Esophagus squamous epithelium (tissue), 5 donors: ENCODE measurements at regions of chr10 and their contacts with region 1.

Region 1: DNA sequence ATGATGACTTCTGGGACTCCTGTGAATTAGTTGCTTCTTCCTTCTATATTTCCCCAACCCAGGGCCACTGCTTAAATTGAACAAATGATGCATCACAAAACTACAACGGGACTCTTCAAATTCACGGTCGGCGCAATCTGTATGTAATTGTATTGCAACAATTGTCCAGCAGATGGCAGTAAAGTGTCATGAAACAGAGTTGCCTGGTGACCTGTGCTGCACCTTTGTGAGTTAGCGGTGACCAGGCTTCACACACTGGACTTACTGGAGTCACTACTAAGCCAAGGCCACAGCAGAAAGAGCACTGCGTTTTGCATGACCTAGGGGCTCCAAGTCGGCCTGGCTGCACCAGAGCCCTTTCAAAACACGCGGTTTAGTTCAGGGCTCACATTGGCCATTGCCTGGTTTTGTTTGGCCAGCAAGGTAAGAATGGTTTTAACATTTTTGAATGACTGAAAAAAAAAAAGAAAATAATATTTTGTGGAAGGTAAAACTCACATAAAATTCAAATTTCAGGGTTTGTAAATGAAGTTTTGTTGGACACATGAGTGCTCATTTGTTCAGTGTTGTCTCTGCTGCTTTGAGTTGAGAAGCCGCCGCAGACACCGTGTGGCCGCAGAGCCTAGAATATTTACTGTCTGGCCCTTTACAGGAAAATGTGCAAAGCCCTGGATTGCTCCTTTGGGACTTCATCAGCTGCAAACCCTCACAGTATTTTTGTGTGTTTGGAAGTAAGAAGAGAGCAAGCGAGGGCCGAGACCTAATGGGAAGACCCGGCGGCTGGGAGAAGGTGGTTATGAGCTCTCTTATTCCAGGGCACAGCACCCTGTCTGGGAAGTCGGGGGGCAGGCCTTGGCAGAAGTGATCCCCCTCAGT is 23.2 kb upstream of the ZNF32 start:
- DNase-seq: no peak
- H3K4me3 ChIP-seq: no peak overlapping the region
- H3K27ac ChIP-seq: no peak overlapping the region
- H3K4me1 ChIP-seq: peaks cover 0 to 18% (median 0%) of the 10 kb centered on the region in 3 donors
- H3K27me3 ChIP-seq: peaks cover 0 to 46% (median 4%) of the 10 kb centered on the region in 4 donors
- CTCF ChIP-seq: peak; percentile 56 to 88 (median 81)
- POLR2A ChIP-seq: no peak

Region 2: DNA sequence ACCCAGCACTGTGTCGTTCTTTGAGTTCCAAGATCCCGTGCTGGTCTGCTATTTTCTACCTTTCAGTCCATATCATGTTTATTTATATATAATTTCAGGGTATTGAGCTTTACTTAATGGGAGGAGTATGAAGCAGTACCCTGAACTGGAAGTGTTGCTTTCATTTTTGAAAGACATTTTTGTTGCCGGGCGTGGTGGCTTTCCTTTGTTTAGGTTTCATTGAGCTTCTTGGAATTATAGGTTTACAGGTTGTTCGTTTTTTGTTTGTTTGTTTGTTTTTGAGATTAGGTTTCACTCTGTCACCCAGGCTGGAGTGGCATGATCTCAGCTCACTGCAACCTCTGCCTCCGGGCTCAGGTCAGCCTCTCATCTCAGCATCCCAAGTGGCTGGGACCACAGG is 227.6 kb before region 1 on chr10:
- intact Hi-C with region 1: no loop called
- DNase-seq: no peak
- H3K4me3 ChIP-seq: no peak overlapping the region
- H3K27ac ChIP-seq: peak overlapping the region in 3 of 4 donors; percentile 56 to 80 (median 64)
- H3K4me1 ChIP-seq: peaks cover 3 to 16% (median 6%) of the 10 kb centered on the region in 3 donors
- H3K27me3 ChIP-seq: no peaks in the 10 kb centered on the region
- CTCF ChIP-seq: no peak
- POLR2A ChIP-seq: no peak

Region 3: DNA sequence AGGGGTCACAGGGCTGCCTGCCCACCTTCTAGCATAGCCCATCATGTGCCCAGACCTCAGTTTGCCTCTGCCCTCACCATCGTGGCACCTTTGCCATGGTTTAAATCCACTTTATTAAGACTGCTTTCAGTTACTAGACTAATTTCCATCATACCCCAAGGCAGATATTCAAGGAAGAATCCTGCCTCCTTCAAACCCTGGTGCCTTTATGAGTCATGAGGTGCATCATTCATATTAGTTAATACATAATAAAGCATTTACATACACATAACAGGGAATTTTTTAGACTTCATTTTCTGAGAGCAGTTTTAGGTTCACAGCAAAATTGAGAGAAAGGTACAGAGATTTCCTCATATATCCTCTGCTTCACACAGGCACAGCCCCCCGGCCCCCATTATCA is 650.2 kb after region 1 on chr10:
- intact Hi-C with region 1: loop called (anchors 5 kb)
- DNase-seq: no peak
- H3K4me3 ChIP-seq: no peak overlapping the region
- H3K27ac ChIP-seq: no peak overlapping the region
- H3K4me1 ChIP-seq: peaks cover 0 to 10% (median 0%) of the 10 kb centered on the region in 3 donors
- H3K27me3 ChIP-seq: peaks cover 0 to 4% (median 0%) of the 10 kb centered on the region in 4 donors
- CTCF ChIP-seq: no peak
- POLR2A ChIP-seq: no peak

Region 4: DNA sequence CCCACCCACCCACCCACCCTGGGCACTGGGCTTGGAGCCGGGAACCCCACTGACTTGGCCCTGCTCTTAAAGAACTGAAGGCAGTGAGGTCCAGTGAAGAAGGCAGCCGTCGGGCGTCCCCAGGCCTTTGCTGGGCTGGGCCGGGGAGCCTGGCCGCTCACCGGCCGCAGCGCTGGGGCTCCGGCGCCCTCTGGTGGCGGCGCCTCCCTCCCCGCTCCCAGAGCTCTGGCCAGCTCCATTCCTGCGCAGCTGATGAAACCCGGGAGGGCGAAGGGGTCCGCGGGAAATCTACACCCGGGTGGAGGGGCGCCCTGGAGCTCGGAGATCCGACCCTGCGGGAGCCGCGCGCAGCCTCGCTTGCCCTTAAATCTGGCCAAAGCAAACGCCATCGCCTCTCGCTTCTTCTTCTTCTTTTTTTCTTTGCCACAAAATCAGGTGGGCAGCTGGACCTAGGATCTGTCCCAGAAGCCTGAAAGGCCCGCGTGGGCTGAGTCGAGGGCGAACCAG is 714.7 kb after region 1 on chr10:
- intact Hi-C with region 1: loop called (anchors 5 kb)
- DNase-seq: no peak
- H3K4me3 ChIP-seq: peak overlapping the region in 1 of 4 donors; percentile 36
- H3K27ac ChIP-seq: peak overlapping the region in 1 of 4 donors; percentile 17
- H3K4me1 ChIP-seq: peaks cover 10 to 39% (median 15%) of the 10 kb centered on the region in 3 donors
- H3K27me3 ChIP-seq: peaks cover 7 to 72% (median 12%) of the 10 kb centered on the region in 4 donors
- CTCF ChIP-seq: peak; percentile 64 to 88 (median 84)
- POLR2A ChIP-seq: no peak